Dorsolateral prefrontal cortex (tissue), 120 donors: ENCODE measurements at regions of chrX and their contacts with region 1.

Region 1: GRCh38 chrX:10189317-10190268 is 32.8 kb downstream of the CLCN4 start:
- DNase-seq: peak; percentile 67 to 88 (median 82)
- H3K4me3 ChIP-seq: no peak overlapping the region
- H3K27ac ChIP-seq: peak overlapping the region in 34 of 59 donors; percentile 1 to 65 (median 36)
- H3K27me3 ChIP-seq: peaks cover 0 to 62% (median 11%) of the 10 kb centered on the region in 45 donors
- CTCF ChIP-seq: peak; percentile 20 to 97 (median 90)

Region 2: DNA sequence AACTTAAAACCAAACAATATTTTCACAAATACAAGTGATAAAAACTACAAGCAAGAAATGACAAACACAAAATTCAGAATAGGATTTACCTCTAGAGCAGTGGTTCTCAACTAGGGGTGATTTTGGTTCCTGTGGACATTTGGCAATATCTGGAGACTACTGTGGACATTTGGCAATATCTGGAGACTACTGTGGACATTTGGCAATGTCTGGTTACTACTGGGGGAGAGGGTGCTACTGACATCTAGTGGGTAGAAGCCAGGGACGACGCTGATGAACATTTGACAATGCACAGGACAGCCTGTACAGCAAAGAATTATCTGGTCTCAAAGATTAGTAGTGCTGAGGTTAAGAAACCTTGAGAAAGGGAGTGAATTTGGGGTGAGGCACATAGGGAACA is 137.0 kb after region 1 on chrX:
- intact Hi-C with region 1: loop called (anchors 5 to 10 kb)
- DNase-seq: peak in 2 of 10 donors; percentile 25 to 26
- H3K4me3 ChIP-seq: no peak overlapping the region
- H3K27ac ChIP-seq: no peak overlapping the region
- H3K27me3 ChIP-seq: peaks cover 0 to 63% (median 15%) of the 10 kb centered on the region in 45 donors
- CTCF ChIP-seq: peak in 35 of 56 donors; percentile 7 to 58 (median 31)

Region 3: DNA sequence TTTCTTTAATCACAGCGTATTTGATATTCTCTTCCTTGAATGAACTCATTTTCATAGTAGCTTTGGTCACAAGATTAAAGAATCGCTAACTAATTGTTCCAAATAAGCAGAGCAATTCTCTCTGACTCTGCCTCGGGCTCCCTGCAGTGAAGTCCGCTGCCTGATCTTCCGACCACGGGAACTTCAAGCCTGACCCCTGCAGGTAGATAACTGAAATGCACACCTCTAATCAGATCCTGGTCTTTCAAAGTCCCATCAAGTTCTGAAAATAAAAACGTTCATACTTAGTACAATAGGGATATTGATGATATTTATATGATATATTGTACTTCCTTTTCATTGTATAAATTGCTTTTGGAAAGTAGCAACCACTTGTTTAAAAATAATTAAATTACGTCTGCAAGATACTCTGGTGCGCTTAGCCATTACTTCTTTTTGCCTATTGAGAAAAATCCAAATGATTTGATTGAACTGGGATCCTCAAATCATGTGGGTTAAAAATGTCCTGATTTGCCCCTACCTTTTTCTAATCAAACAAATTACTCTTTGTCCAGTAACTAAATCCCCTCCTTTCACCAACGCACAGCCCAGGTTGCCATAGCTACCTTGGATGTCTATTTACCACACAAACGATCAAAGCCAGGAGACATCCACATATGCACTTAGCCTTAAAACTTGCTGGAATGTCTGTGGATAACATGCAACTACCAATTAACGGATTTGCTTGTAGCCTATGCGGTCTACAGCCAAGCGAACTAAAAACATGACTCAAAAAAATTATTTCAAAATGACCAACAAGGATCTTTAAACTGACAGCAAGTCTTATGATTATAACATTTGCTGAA is 426.6 kb after region 1 on chrX:
- intact Hi-C with region 1: loop called in 1 of 2 experiments (anchors 5 kb)
- DNase-seq: peak in 4 of 10 donors; percentile 24 to 60 (median 38)
- H3K4me3 ChIP-seq: peak overlapping the region in 39 of 59 donors; percentile 4 to 52 (median 32)
- H3K27ac ChIP-seq: no peak overlapping the region
- H3K27me3 ChIP-seq: peaks cover 0 to 83% (median 27%) of the 10 kb centered on the region in 45 donors
- CTCF ChIP-seq: peak; percentile 16 to 78 (median 64)

Region 4: GRCh38 chrX:10636337-10636736 is 446.7 kb after region 1 on chrX:
- intact Hi-C with region 1: loop called in 1 of 2 experiments (anchors 10 kb)
- DNase-seq: no peak
- H3K4me3 ChIP-seq: peak overlapping the region in 15 of 59 donors; percentile 1 to 35 (median 15)
- H3K27ac ChIP-seq: peak overlapping the region in 4 of 59 donors; percentile 8 to 29 (median 26)
- H3K27me3 ChIP-seq: peaks cover 0 to 40% (median 4%) of the 10 kb centered on the region in 45 donors
- CTCF ChIP-seq: peak in 52 of 56 donors; percentile 23 to 72 (median 51)

Region 5: GRCh38 chrX:10722851-10723250 is 533.3 kb after region 1 on chrX:
- intact Hi-C with region 1: loop called (anchors 5 kb)
- DNase-seq: peak in 6 of 10 donors; percentile 37 to 70 (median 46)
- H3K4me3 ChIP-seq: no peak overlapping the region
- H3K27ac ChIP-seq: no peak overlapping the region
- H3K27me3 ChIP-seq: peaks cover 0 to 39% (median 6%) of the 10 kb centered on the region in 45 donors
- CTCF ChIP-seq: peak; percentile 31 to 86 (median 72)